ENCODE measurements at regions of chr7 and their contacts with region 1.

Region 1: GRCh38 chr7:123705211-123705901 is 43.4 kb downstream of the WASL start:
- DNase-seq: no peak
- H3K4me3 Mint-ChIP-seq: no peak overlapping the region
- H3K27ac Mint-ChIP-seq: no peak overlapping the region
- H3K4me1 Mint-ChIP-seq: peaks cover 2% of the 10 kb centered on the region
- H3K27me3 Mint-ChIP-seq: no peaks in the 10 kb centered on the region

Region 2: GRCh38 chr7:123494193-123494796 is 211.1 kb before region 1 on chr7:
- CTCF ChIA-PET with region 1: interaction called, 9 read pairs
- POLR2A ChIA-PET with region 1: no interaction called
- intact Hi-C with region 1: loop called (anchors 1 kb)
- DNase-seq: peak; percentile 14
- H3K4me3 Mint-ChIP-seq: no peak overlapping the region
- H3K27ac Mint-ChIP-seq: no peak overlapping the region
- H3K4me1 Mint-ChIP-seq: no peaks in the 10 kb centered on the region
- H3K27me3 Mint-ChIP-seq: peaks cover 11% of the 10 kb centered on the region

Region 3: GRCh38 chr7:123624527-123625183 is 80.7 kb before region 1 on chr7:
- CTCF ChIA-PET with region 1: interaction called, 11 read pairs
- POLR2A ChIA-PET with region 1: no interaction called
- intact Hi-C with region 1: loop called (anchors 2 kb)
- DNase-seq: peak; percentile 80
- H3K4me3 Mint-ChIP-seq: no peak overlapping the region
- H3K27ac Mint-ChIP-seq: no peak overlapping the region
- H3K4me1 Mint-ChIP-seq: no peaks in the 10 kb centered on the region
- H3K27me3 Mint-ChIP-seq: no peaks in the 10 kb centered on the region

Region 4: GRCh38 chr7:123635551-123636359 is 69.6 kb before region 1 on chr7:
- CTCF ChIA-PET with region 1: no interaction called
- POLR2A ChIA-PET with region 1: no interaction called
- intact Hi-C with region 1: loop called (anchors 2 kb)
- DNase-seq: no peak
- H3K4me3 Mint-ChIP-seq: no peak overlapping the region
- H3K27ac Mint-ChIP-seq: no peak overlapping the region
- H3K4me1 Mint-ChIP-seq: no peaks in the 10 kb centered on the region
- H3K27me3 Mint-ChIP-seq: peaks cover 17% of the 10 kb centered on the region

Region 5: DNA sequence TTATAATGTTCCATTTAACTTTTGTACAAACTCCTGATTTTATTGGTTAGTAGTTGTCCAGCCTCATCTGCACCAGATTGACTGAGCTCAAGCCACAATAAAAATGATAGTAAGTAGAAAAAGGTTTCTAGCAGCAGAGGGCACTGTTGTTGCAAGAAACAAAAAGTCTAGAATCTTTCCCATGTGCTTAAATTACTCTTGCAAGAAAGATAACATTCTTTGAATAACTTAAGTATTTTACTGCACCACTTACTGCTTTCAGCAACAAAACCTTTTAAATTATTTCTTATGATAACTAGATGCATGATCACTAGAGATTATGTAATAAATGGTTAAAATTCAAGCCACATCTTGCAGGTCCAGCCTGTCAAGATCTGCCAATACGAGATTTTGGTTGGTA is 22.7 kb before region 1 on chr7:
- CTCF ChIA-PET with region 1: interaction called, 16 read pairs
- POLR2A ChIA-PET with region 1: no interaction called
- intact Hi-C with region 1: no loop called
- DNase-seq: no peak
- H3K4me3 Mint-ChIP-seq: no peak overlapping the region
- H3K27ac Mint-ChIP-seq: no peak overlapping the region
- H3K4me1 Mint-ChIP-seq: no peaks in the 10 kb centered on the region
- H3K27me3 Mint-ChIP-seq: no peaks in the 10 kb centered on the region

Region 6: GRCh38 chr7:123692471-123692877 is 12.9 kb before region 1 on chr7:
- CTCF ChIA-PET with region 1: interaction called, 14 read pairs
- POLR2A ChIA-PET with region 1: no interaction called
- intact Hi-C with region 1: no loop called
- DNase-seq: no peak
- H3K4me3 Mint-ChIP-seq: no peak overlapping the region
- H3K27ac Mint-ChIP-seq: no peak overlapping the region
- H3K4me1 Mint-ChIP-seq: no peaks in the 10 kb centered on the region
- H3K27me3 Mint-ChIP-seq: no peaks in the 10 kb centered on the region

Region 7: GRCh38 chr7:124124201-124124600 is 418.8 kb after region 1 on chr7:
- CTCF ChIA-PET with region 1: no interaction called
- POLR2A ChIA-PET with region 1: no interaction called
- intact Hi-C with region 1: no loop called
- DNase-seq: no peak
- H3K4me3 Mint-ChIP-seq: no peak overlapping the region
- H3K27ac Mint-ChIP-seq: no peak overlapping the region
- H3K4me1 Mint-ChIP-seq: no peaks in the 10 kb centered on the region
- H3K27me3 Mint-ChIP-seq: no peaks in the 10 kb centered on the region

Measured in activated CD4-positive, alpha-beta memory T cell treated with anti-CD3 and anti-CD28 coated beads for 36 hours (primary cell).